Dendritic cell treated with granulocyte-macrophage colony-stimulating factor and Interleukin-4, amounts not matched to agents 40 ng/mL and 50 ng/mL, for 4 days (primary cell): ENCODE measurements at regions of chr9 and their contacts with region 1.

Region 1: GRCh38 chr9:100011062-100011681 is 87.6 kb downstream of the ERP44 start:
- H3K4me3 Mint-ChIP-seq: no peak overlapping the region
- H3K27ac Mint-ChIP-seq: no peak overlapping the region
- H3K4me1 Mint-ChIP-seq: no peaks in the 10 kb centered on the region
- H3K27me3 Mint-ChIP-seq: no peaks in the 10 kb centered on the region

Region 2: DNA sequence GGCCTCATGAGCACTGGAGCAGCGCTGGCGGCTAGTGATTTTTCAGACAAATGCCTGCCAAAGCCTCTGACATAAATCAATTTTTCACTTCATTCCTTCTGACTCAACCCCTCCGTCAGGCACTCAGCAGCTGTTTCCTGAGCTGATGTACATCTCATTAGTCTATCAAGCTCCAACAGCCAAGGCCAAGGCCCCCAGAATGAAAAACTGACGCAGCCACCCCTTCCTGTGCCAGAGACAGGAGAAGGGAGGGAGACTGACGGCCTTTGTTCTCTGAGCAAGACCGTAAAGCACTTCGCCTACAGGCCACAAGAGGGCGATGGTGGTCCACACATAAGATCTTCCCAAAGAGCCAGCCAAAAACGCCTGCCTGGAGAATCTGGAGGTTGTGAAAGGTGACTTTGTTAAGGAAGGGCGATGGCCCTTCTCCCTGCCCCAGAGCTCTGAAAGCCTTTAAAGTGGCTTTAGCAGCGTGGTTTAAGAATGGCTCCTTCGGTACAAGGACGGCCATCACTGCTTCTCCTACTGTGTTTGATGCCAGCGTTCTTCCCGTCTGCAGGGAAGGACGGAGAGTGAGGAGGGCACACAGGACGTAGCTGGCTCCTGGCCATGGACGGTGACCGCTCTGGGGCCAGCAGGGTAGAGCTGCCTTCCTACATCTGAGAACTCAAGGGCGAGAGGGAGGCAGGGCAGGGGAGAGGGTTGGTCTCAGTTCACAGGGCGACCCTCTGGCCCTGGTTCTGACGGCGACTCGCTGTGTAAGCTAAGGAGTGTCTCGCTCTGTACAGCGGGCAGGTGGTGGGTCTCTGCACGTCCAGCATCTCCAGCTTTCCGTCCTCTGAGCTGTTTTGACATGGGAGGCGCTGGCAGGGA is 826.5 kb before region 1 on chr9:
- intact Hi-C with region 1: loop called (anchors 5 kb)
- H3K4me3 Mint-ChIP-seq: no peak overlapping the region
- H3K27ac Mint-ChIP-seq: peak overlapping the region; percentile 25
- H3K4me1 Mint-ChIP-seq: peaks cover 79% of the 10 kb centered on the region
- H3K27me3 Mint-ChIP-seq: no peaks in the 10 kb centered on the region

Region 3: DNA sequence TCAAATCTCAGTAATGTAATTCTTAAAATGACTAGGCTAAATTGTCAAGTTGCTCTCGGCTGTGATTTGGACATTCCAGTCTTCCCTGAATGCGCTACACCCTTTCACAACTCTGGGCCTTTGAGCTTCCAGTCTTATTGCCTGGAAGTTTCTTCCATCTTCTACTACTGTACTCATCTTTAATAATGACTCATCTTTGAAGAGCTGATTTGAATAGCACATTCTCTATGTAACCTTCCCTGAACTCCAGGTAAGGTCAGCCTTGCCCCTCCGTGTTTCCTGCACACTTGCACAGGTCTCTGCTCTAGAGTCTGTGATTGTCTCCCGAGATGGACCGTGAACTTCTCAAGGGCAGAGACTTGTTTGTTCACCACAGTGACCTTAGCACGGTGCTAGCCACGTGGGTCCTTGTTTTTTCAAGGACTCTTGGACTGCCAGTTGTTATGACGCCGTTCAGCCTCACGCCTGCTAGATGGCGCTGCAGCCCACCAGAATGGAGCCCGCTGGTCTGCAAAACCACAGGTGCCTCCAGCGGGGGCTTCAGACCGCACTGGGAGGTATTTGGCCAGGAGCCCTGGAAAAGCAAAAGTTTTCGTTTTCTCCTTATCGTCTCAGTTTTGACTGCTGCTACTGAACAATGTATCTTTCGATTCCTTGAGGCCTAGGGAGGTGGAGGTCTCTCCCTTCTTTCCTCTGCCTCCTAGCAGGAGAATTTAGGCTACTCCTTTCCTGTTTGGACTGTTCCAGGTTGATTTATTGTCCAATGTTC is 744.7 kb before region 1 on chr9:
- intact Hi-C with region 1: loop called (anchors 10 kb)
- H3K4me3 Mint-ChIP-seq: no peak overlapping the region
- H3K27ac Mint-ChIP-seq: no peak overlapping the region
- H3K4me1 Mint-ChIP-seq: peaks cover 23% of the 10 kb centered on the region
- H3K27me3 Mint-ChIP-seq: peaks cover 2% of the 10 kb centered on the region

Region 4: GRCh38 chr9:99299211-99300102 is 711.7 kb before region 1 on chr9:
- intact Hi-C with region 1: loop called (anchors 5 kb)
- H3K4me3 Mint-ChIP-seq: no peak overlapping the region
- H3K27ac Mint-ChIP-seq: no peak overlapping the region
- H3K4me1 Mint-ChIP-seq: peaks cover 19% of the 10 kb centered on the region
- H3K27me3 Mint-ChIP-seq: peaks cover 14% of the 10 kb centered on the region

Region 5: GRCh38 chr9:99807276-99807852 is 203.8 kb before region 1 on chr9:
- intact Hi-C with region 1: loop called (anchors 5 kb)
- H3K4me3 Mint-ChIP-seq: no peak overlapping the region
- H3K27ac Mint-ChIP-seq: no peak overlapping the region
- H3K4me1 Mint-ChIP-seq: peaks cover 11% of the 10 kb centered on the region
- H3K27me3 Mint-ChIP-seq: no peaks in the 10 kb centered on the region

Region 6: DNA sequence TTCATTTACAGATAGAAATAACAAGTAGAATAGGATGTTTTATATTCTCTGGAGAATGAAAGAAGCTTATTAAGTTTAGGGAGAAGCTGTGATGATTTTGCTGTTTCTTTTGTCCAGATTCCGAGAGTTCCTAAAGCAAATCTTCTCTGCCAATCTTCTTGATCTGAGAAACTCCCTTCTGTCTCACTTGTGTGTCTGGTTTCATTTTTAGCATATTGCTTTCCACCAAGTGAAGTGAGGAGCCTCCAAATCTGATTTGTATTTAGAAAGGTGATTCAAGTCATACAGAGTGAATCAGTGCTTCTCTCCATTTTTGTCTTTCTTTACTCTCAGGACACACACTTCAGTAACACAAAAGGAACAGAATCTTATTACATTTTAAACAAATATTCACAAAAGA is 56.4 kb before region 1 on chr9:
- intact Hi-C with region 1: no loop called
- H3K4me3 Mint-ChIP-seq: no peak overlapping the region
- H3K27ac Mint-ChIP-seq: no peak overlapping the region
- H3K4me1 Mint-ChIP-seq: no peaks in the 10 kb centered on the region
- H3K27me3 Mint-ChIP-seq: no peaks in the 10 kb centered on the region

Region 7: DNA sequence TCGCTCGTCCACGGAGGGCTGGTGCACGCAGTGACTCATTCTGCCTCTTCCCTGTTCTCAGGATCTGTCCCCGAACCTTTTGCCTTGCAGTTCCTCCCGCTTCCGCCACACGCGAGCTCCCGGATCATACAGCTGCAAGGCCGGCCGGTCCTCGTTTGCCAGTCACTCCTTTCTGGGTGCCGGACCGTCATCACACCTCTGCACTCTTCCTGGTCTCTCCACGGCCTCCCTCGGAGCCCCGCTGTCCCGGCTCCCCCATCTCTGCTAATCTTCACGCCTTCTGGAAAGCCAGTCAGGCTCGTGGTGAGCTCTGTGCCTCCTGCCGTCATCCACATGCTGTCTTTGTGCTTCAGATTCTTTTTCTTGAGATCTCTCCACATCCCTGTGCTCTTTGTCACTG is 12.9 kb before region 1 on chr9:
- intact Hi-C with region 1: no loop called
- H3K4me3 Mint-ChIP-seq: no peak overlapping the region
- H3K27ac Mint-ChIP-seq: no peak overlapping the region
- H3K4me1 Mint-ChIP-seq: no peaks in the 10 kb centered on the region
- H3K27me3 Mint-ChIP-seq: no peaks in the 10 kb centered on the region